ENCODE measurements at regions of chr16 and their contacts with region 1.

Region 1: DNA sequence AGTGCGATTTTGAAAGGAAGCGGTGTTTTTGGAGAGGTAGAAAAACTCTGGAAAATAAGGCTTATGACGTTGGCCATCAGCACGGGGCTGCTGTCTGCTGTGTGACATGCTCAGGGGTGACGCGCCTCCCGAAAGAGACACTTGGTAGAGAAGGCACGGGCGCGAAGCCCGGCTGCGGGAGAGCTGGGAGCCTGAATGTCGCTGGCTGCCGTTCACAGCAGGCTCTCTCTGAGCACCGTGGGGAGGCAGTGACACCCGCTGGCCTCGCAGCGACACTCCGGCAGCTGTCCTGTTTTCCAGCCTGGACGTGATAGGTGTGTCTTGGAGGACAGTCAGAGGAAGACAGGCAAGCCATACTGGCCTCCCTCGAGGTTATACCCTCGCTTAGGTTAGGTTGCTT is 759.1 kb upstream of the RBFOX1 start:
- DNase-seq: peak; percentile 52 to 88 (median 81)
- H3K4me3 ChIP-seq: peak overlapping the region in 47 of 59 donors; percentile 4 to 61 (median 30)
- H3K27ac ChIP-seq: peak overlapping the region in 17 of 59 donors; percentile 1 to 60 (median 34)
- H3K27me3 ChIP-seq: no peaks in the 10 kb centered on the region
- CTCF ChIP-seq: peak; percentile 17 to 84 (median 61)

Region 2: DNA sequence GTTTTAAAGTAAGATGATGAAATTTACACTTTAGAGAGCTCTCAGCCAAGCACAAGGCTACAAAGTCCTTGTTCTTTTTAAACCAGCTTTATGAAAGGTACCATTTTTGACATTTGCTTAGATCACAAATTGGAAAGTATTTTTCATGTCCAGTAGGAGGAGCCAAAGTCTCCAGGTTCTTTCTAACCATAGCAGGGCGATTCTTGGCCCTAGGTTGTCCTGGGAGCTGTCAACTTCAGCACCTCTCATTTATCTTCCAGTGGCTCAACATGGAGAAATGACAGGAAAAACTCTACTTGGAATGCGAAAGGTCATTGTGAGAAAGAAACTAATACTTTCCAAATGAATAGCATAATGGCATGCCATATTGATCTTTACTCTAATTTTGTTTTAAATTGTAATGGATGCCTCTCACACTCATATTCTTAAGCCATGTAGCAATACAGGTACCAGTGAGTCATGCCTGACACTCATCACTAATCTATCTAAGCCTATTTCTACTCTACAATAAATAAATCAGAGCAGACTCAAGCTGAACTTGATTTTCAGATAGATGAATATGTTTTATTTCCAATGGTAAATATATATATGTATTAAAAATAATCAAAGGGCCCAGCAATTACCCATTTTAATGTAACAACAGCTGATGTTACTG is 556.9 kb before region 1 on chr16:
- intact Hi-C with region 1: loop called in 1 of 2 experiments (anchors 5 kb)
- DNase-seq: peak in 1 of 10 donors; percentile 35
- H3K4me3 ChIP-seq: no peak overlapping the region
- H3K27ac ChIP-seq: no peak overlapping the region
- H3K27me3 ChIP-seq: peaks cover 0 to 52% (median 24%) of the 10 kb centered on the region in 45 donors
- CTCF ChIP-seq: peak in 52 of 56 donors; percentile 9 to 55 (median 41)

Region 3: DNA sequence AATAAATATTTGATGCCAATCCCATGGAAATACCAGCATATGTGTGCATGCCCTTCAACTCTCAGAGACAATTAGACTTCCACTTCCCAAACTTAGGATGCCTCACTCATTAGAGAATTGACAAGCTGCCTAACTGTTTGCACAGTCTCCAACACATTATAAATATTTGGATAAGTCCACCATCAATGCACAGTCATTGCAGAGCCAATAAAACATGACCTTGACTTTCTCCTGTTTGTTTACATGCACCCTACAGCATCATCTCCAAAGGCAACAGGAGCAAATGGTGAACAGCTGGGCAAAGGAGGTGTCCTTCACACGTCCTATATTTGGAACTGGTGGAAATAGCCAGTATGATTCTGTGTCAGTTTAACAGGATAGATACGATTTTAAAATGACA is 45.4 kb before region 1 on chr16:
- intact Hi-C with region 1: no loop called
- DNase-seq: no peak
- H3K4me3 ChIP-seq: no peak overlapping the region
- H3K27ac ChIP-seq: no peak overlapping the region
- H3K27me3 ChIP-seq: peaks cover 0 to 6% (median 0%) of the 10 kb centered on the region in 45 donors
- CTCF ChIP-seq: no peak